Activated CD4-positive, alpha-beta T cell treated with anti-CD3 and anti-CD28 coated beads, Interleukin-2, amount 10 ng/mL, durations not matched to agents 7 days and 5 days (primary cell): ENCODE measurements at regions of chr10 and their contacts with region 1.

Region 1: GRCh38 chr10:72273410-72274212 is at the start of gene DDIT4:
- DNase-seq: peak; percentile 99
- H3K4me3 Mint-ChIP-seq: peak within 1 kb of the TSS; percentile 98
- H3K27ac Mint-ChIP-seq: peak within 1 kb of the TSS; percentile 96
- H3K4me1 Mint-ChIP-seq: peaks cover 56% of the 10 kb centered on the region
- H3K27me3 Mint-ChIP-seq: no peaks in the 10 kb centered on the region
- total RNA-seq, gene DDIT4: 166 to 189 TPM

Region 2: GRCh38 chr10:72223743-72224101 is 49.9 kb before region 1 on chr10:
- CTCF ChIA-PET with region 1: interaction called, 12 read pairs
- POLR2A ChIA-PET with region 1: interaction called, 3 read pairs
- DNase-seq: no peak
- H3K4me3 Mint-ChIP-seq: peak overlapping the region; percentile 4
- H3K27ac Mint-ChIP-seq: peak overlapping the region; percentile 69
- H3K4me1 Mint-ChIP-seq: peaks cover 49% of the 10 kb centered on the region
- H3K27me3 Mint-ChIP-seq: no peaks in the 10 kb centered on the region

Region 3: GRCh38 chr10:72254813-72255568 is 18.6 kb before region 1 on chr10:
- CTCF ChIA-PET with region 1: interaction called, 49 read pairs
- POLR2A ChIA-PET with region 1: interaction called, 3 read pairs
- DNase-seq: peak; percentile 55
- H3K4me3 Mint-ChIP-seq: peak overlapping the region; percentile 66
- H3K27ac Mint-ChIP-seq: peak overlapping the region; percentile 94
- H3K4me1 Mint-ChIP-seq: peaks cover 77% of the 10 kb centered on the region
- H3K27me3 Mint-ChIP-seq: no peaks in the 10 kb centered on the region

Region 4: GRCh38 chr10:72292223-72292691 is 18.6 kb after region 1 on chr10:
- CTCF ChIA-PET with region 1: interaction called, 45 read pairs
- POLR2A ChIA-PET with region 1: interaction called, 15 read pairs
- DNase-seq: peak; percentile 29
- H3K4me3 Mint-ChIP-seq: peak overlapping the region; percentile 11
- H3K27ac Mint-ChIP-seq: peak overlapping the region; percentile 84
- H3K4me1 Mint-ChIP-seq: peaks cover 67% of the 10 kb centered on the region
- H3K27me3 Mint-ChIP-seq: no peaks in the 10 kb centered on the region

Region 5: GRCh38 chr10:72308320-72308987 is 34.8 kb after region 1 on chr10:
- CTCF ChIA-PET with region 1: interaction called, 13 read pairs
- POLR2A ChIA-PET with region 1: interaction called, 3 read pairs
- DNase-seq: peak; percentile 40
- H3K4me3 Mint-ChIP-seq: no peak overlapping the region
- H3K27ac Mint-ChIP-seq: peak overlapping the region; percentile 77
- H3K4me1 Mint-ChIP-seq: peaks cover 73% of the 10 kb centered on the region
- H3K27me3 Mint-ChIP-seq: no peaks in the 10 kb centered on the region

Region 6: DNA sequence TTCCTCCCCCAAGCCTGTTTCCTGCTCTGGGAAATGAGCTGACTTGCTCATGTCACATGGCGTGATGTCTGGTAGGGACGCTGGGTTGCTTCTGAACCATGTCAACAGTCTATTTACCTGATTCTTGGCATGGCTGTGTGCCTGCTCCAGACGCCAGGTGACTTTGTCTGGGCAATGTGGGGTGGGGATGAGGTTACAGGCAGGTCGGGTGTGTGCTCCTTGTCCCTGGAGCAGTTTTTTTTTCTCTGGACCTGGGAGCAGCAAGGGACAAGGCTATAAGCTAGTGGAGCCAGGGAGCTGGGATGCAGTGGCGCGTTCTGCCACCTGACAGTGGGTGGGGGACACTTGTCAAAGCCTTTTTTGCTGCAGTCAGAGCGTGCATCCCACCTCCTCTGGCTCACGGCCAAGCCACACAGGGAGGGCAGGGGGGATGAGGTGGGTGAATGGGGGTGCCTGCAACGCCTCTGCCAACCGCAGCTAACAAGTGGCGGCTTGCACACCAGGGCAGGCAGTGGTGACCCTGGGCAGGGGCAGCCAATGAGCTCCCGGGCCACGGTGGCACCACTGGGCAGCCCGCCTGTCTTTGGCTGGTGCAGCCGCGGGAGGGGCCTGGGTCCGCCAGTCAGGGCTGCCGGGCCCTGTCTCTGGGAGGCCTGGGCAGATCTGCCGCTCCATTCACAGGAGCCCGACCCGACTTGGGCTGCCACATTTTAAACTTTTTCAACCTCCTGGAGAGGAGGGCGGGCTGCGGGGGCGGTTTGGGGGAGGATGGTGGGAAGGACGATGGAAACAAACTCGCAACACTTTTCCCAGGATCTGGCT is 58.2 kb after region 1 on chr10:
- CTCF ChIA-PET with region 1: interaction called, 37 read pairs
- POLR2A ChIA-PET with region 1: interaction called, 5 read pairs
- DNase-seq: peak; percentile 86
- H3K4me3 Mint-ChIP-seq: peak overlapping the region; percentile 45
- H3K27ac Mint-ChIP-seq: peak overlapping the region; percentile 89
- H3K4me1 Mint-ChIP-seq: peaks cover 88% of the 10 kb centered on the region
- H3K27me3 Mint-ChIP-seq: no peaks in the 10 kb centered on the region

Region 7: DNA sequence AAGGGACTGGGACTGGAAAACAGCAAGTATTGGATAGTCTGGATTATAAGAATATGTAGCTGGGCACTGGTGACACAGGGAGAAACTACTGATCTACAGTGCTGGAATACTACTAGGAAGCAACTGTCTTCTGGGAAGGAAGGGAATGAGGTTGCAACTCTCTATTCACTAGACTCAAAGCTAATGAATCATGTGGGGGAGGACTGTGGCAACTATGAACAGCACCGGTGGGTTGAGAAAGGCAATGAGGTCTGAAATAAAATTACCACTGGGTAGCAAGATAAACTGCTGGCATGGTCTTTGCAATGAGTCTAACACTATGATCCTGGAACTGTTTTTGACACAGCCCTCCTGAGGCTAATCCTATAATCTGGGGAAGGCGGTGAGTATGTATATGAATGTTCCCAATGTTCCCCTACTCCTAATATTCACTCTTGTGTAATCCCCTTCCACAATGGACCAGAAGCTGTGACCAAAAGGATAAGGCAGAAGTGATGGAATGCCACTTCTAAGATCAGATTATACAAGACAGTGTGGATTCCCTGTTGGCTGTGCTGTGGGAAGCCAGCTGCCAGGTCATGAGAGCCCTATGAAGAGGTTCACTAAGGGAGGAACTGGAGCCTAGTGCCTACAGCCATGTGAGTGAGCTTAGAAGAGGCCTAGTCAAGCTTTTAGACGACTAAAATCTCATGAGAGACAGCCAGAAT is 182.4 kb after region 1 on chr10:
- CTCF ChIA-PET with region 1: no interaction called
- POLR2A ChIA-PET with region 1: no interaction called
- DNase-seq: no peak
- H3K4me3 Mint-ChIP-seq: no peak overlapping the region
- H3K27ac Mint-ChIP-seq: no peak overlapping the region
- H3K4me1 Mint-ChIP-seq: no peaks in the 10 kb centered on the region
- H3K27me3 Mint-ChIP-seq: no peaks in the 10 kb centered on the region

Region 8: GRCh38 chr10:72470666-72471065 is 197.1 kb after region 1 on chr10:
- CTCF ChIA-PET with region 1: no interaction called
- POLR2A ChIA-PET with region 1: no interaction called
- DNase-seq: no peak
- H3K4me3 Mint-ChIP-seq: no peak overlapping the region
- H3K27ac Mint-ChIP-seq: no peak overlapping the region
- H3K4me1 Mint-ChIP-seq: no peaks in the 10 kb centered on the region
- H3K27me3 Mint-ChIP-seq: no peaks in the 10 kb centered on the region